Heart right ventricle (tissue), 16 donors: ENCODE measurements at regions of chr7 and their contacts with region 1.

Region 1: DNA sequence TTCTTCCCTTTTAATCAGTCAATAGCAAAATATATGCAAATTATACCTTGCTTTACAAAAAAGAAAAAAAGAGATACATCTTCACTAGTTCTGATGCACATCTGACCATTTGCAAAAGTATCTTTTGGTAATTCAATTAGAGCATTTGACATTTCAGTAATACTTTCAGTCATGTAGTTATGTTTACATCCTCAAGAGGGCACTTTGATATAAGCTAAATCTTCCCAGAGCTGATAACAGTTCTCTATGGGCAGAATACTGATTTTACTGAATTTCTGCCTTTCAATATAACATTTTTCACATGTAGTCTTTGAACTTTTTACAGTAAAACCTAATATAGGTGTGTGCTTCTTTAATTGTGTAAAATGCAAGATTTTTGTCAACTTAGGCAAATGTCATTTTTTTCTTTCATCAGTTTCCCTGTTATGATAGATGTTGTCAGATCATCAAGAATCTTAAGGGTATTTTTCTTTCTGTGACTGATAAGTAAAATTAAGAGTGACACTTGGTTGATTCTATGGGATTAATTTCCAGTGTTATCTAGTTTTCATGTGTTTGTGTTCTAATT is 703.5 kb upstream of the SEMA3D start:
- DNase-seq: no peak
- ATAC-seq: no peak
- H3K4me3 ChIP-seq: no peak overlapping the region
- H3K27ac ChIP-seq: no peak overlapping the region
- H3K4me1 ChIP-seq: no peaks in the 10 kb centered on the region
- H3K27me3 ChIP-seq: no peaks in the 10 kb centered on the region
- CTCF ChIP-seq: peak; percentile 4 to 61 (median 47)

Region 2: DNA sequence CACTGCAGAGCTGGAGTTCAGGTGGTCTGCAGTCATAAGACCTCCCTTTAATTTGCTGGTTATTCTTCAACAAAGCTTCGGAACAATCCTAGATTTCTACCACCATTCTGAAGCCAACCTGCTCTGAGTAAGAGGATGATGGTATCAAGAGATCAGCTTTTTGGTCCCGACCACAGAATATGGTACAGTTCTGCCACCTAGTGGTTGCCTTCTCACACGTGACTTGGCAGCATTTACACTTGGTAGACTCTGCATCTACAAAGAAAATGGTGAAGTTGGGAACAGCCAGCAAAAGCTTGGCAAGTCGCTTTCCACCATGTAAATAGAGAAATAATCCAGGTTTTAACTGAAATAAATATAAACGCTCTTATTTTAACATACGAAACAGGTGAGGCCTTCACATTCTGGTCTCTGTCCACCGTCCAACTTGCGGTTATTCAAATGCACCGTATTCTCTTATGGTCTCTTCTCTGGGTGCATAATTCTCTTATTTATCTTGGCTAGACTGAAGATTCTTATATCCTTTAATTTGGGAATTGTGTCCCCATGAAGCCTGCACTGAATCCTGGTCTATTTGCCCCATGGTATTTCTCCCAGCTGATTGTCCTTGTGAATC is 579.5 kb after region 1 on chr7:
- intact Hi-C with region 1: loop called in 5 of 10 experiments (anchors 1 to 10 kb)
- DNase-seq: peak in 1 of 2 donors; percentile 13
- ATAC-seq: no peak
- H3K4me3 ChIP-seq: no peak overlapping the region
- H3K27ac ChIP-seq: no peak overlapping the region
- H3K4me1 ChIP-seq: no peaks in the 10 kb centered on the region
- H3K27me3 ChIP-seq: peaks cover 0 to 3% (median 0%) of the 10 kb centered on the region in 7 donors
- CTCF ChIP-seq: peak in 8 of 9 donors; percentile 15 to 64 (median 56)

Region 3: DNA sequence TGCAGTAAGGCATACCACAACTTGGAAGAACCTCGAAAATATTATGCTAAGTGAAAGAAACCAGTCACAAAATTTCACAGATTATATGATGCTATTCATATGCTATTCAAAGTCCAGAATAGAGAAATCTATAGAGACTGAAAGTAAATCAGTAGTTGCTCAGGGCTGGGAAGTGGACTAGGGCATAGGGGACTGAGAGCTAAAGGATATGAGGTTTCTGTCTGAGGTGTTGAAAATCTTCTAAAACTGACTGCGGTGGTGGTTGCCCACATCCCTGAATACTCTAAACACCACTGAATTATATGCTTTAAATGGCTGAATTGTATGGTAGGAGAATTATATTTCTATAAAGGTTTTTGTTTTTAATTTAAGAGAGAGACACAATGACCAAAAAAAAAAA is 1007.8 kb after region 1 on chr7:
- intact Hi-C with region 1: loop called in 7 of 10 experiments (anchors 5 to 10 kb)
- DNase-seq: no peak
- ATAC-seq: no peak
- H3K4me3 ChIP-seq: no peak overlapping the region
- H3K27ac ChIP-seq: no peak overlapping the region
- H3K4me1 ChIP-seq: no peaks in the 10 kb centered on the region
- H3K27me3 ChIP-seq: no peaks in the 10 kb centered on the region
- CTCF ChIP-seq: no peak

Region 4: DNA sequence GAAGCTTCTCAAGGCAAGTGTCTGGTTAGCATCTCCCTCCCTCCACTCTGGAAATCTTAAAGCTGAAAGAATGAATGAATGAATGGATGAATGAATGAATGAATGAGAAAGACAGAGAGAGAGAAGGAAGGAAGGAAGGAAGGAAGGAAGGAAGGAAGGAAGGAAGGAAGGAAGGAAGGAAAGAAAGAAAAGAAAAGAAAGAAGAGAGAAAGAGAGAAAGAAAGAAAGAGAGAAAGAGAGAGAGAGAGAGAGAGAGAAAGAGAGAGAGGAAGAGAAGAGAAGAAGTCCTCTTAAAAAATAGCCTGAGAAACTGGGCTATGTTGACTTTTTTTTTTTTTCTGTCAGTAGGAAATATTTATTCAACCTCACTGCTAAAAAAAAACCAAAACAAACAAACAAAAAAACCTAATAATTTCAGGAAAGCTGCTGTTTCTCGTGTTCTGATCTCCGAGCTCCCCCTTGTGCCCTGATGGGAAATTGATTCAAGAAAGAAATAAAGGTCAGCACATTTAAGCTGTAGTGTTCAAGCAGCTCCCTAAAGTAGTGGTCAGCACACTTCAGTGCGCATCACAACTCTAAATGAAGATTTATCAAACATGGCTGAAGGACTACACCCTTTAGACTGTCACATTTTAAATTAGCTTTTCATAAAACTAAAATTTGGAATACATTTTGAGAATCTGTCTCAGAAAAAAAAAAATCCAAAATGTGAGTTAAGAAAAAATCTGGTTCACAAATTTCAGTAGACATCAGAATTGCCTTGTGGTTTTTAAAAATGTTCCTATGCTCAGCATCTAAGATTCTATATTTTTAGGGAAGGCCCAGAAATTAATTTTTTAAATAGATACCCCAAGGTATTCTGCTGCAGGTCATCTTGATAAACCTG is 1014.9 kb after region 1 on chr7:
- intact Hi-C with region 1: loop called in 8 of 10 experiments (anchors 5 to 10 kb)
- DNase-seq: no peak
- ATAC-seq: no peak
- H3K4me3 ChIP-seq: no peak overlapping the region
- H3K27ac ChIP-seq: no peak overlapping the region
- H3K4me1 ChIP-seq: no peaks in the 10 kb centered on the region
- H3K27me3 ChIP-seq: no peaks in the 10 kb centered on the region
- CTCF ChIP-seq: peak in 8 of 9 donors; percentile 17 to 62 (median 57)